A673 (cell line): ENCODE measurements at regions of chr3 and their contacts with region 1.

Region 1: DNA sequence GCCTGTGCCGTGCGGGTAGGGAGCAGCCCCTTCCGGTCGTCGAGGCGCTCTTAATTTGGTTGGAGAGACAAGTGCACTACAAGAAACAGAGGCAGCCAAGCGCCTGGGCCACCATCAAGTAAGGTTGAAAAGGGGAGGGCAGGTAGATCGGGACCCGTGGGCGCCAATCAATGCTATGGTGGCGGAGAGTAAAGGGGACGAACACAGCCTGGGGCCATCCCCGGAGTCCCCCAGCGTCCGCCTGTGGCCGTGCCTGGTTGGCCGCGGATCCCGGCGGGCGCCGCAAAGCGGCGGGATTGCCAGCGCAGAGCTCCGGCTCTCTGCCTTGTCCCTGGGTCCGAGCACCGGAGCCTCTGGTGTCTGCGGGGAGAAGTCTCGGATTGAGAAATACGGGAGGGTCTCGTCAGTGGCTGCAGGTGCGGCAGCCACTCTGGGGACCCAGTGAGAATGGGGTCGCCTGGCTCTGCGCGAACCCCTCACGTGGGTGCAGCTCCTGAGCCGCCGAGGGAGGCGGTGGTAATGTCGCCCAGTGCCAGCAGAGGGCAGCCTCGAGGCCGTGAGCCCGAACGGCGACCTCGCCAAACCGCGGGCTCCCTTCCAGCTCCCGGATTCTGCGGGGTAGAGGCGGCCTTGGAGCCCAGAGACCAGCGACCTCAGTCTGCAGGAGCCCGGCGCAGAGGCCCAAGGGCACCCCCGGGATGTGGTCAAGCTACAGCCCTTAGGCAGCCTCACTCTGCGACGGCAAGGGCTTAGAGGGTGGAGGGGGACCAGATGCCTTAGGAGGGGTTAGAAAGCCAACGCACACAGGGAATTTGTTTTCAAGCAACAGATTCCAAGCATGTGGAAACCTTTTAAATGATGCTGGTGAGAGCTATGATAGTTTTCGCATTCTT is 10.8 kb downstream of the FOXL2 start:
- DNase-seq: peak; percentile 61
- H3K4me3 ChIP-seq: peak overlapping the region; percentile 45
- H3K27ac ChIP-seq: no peak overlapping the region
- H3K4me1 ChIP-seq: peaks cover 5% of the 10 kb centered on the region
- H3K27me3 ChIP-seq: peaks cover 59% of the 10 kb centered on the region
- CTCF ChIP-seq: peak; percentile 88

Region 2: GRCh38 chr3:138210528-138210927 is 725.6 kb before region 1 on chr3:
- CTCF ChIA-PET with region 1: interaction called, 10 read pairs
- POLR2A ChIA-PET with region 1: no interaction called
- intact Hi-C with region 1: no loop called
- DNase-seq: no peak
- H3K4me3 ChIP-seq: no peak overlapping the region
- H3K27ac ChIP-seq: no peak overlapping the region
- H3K4me1 ChIP-seq: peaks cover 5% of the 10 kb centered on the region
- H3K27me3 ChIP-seq: no peaks in the 10 kb centered on the region
- CTCF ChIP-seq: no peak

Region 3: DNA sequence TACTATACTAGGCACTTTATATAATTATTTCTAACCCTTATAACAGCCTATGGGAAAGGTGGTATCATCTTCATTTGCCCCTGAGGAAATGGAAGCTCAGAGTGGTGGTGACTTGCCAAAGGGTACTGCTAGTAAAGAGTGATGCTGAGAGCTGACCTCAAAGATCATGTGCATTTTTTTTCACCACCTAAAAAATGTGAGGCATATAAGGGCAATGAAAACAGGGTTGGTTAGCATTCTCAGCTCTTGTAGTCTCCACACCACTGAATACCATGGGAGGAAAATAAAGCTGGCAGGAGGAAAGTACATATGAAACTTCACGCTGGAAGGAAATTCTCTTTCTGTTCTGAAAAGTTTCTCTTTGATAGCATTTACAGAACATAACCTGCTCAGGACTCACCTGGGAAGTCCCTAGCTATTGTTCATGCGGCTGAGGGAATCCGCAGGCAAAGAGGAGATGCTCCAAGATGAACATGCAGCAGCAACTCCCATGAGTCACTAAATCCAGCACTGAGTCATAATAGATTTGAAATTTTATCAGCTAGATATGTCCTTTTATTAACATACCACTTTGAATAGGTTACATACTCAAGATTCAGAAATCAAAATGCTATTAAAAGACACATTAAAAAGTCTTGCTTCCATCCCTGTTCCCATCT is 310.3 kb before region 1 on chr3:
- CTCF ChIA-PET with region 1: no interaction called
- POLR2A ChIA-PET with region 1: no interaction called
- intact Hi-C with region 1: no loop called
- DNase-seq: no peak
- H3K4me3 ChIP-seq: no peak overlapping the region
- H3K27ac ChIP-seq: no peak overlapping the region
- H3K4me1 ChIP-seq: no peaks in the 10 kb centered on the region
- H3K27me3 ChIP-seq: no peaks in the 10 kb centered on the region
- CTCF ChIP-seq: no peak

Region 4: DNA sequence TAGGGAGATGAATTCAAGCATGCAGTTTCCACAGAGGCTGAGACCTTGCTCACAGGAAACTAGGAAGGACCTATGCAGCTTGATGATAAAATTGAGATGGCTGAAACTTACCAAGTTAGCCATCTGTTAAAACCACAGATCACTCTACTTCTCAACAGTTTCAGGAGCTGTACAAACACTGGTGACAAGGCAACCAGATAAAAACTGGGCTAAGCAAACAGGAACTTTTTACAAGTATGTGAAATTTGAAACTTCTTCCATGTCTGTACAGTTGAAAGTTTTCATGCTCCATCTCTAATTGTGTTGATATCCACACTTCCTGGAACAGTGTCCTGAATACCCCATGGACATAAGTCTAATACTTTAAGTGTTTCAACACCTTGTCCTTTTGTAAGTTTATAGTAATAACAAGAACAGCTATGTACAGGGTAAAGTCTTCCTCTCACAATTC is 249.3 kb before region 1 on chr3:
- CTCF ChIA-PET with region 1: no interaction called
- POLR2A ChIA-PET with region 1: no interaction called
- intact Hi-C with region 1: no loop called
- DNase-seq: peak; percentile 21
- H3K4me3 ChIP-seq: no peak overlapping the region
- H3K27ac ChIP-seq: peak overlapping the region; percentile 11
- H3K4me1 ChIP-seq: peaks cover 38% of the 10 kb centered on the region
- H3K27me3 ChIP-seq: no peaks in the 10 kb centered on the region
- CTCF ChIP-seq: no peak

Region 5: GRCh38 chr3:138915503-138916498 is 20.3 kb before region 1 on chr3:
- CTCF ChIA-PET with region 1: interaction called, 11 read pairs
- POLR2A ChIA-PET with region 1: no interaction called
- intact Hi-C with region 1: no loop called
- DNase-seq: peak; percentile 92
- H3K4me3 ChIP-seq: peak overlapping the region; percentile 86
- H3K27ac ChIP-seq: peak overlapping the region; percentile 77
- H3K4me1 ChIP-seq: no peaks in the 10 kb centered on the region
- H3K27me3 ChIP-seq: no peaks in the 10 kb centered on the region
- CTCF ChIP-seq: peak; percentile 84

Region 6: GRCh38 chr3:138946181-138947059 is 10.3 kb after region 1 on chr3:
- CTCF ChIA-PET with region 1: interaction called, 12 read pairs
- POLR2A ChIA-PET with region 1: no interaction called
- intact Hi-C with region 1: no loop called
- DNase-seq: no peak
- H3K4me3 ChIP-seq: peak overlapping the region; percentile 38
- H3K27ac ChIP-seq: no peak overlapping the region
- H3K4me1 ChIP-seq: peaks cover 5% of the 10 kb centered on the region
- H3K27me3 ChIP-seq: peaks cover 99% of the 10 kb centered on the region
- CTCF ChIP-seq: peak; percentile 22; the same call in 1 of the 2 replicates

Region 7: GRCh38 chr3:139319428-139320402 is 383.6 kb after region 1 on chr3:
- CTCF ChIA-PET with region 1: interaction called, 18 read pairs
- POLR2A ChIA-PET with region 1: no interaction called
- intact Hi-C with region 1: no loop called
- DNase-seq: peak; percentile 45
- H3K4me3 ChIP-seq: no peak overlapping the region
- H3K27ac ChIP-seq: no peak overlapping the region
- H3K4me1 ChIP-seq: no peaks in the 10 kb centered on the region
- H3K27me3 ChIP-seq: peaks cover 25% of the 10 kb centered on the region
- CTCF ChIP-seq: peak; percentile 56